ENCODE measurements at regions of chr20 and their contacts with region 1.

Region 1: GRCh38 chr20:11178946-11179654 is 505.3 kb upstream of the JAG1 start:
- DNase-seq: peak; percentile 98
- ATAC-seq: peak; percentile 94
- H3K4me3 ChIP-seq: no peak overlapping the region
- H3K27ac ChIP-seq: peak overlapping the region; percentile 85
- H3K4me1 ChIP-seq: peaks cover 36% of the 10 kb centered on the region
- H3K27me3 ChIP-seq: no peaks in the 10 kb centered on the region
- CTCF ChIP-seq: peak; percentile 40

Region 2: GRCh38 chr20:11117808-11118528 is 61.1 kb before region 1 on chr20:
- CTCF ChIA-PET with region 1: no interaction called
- POLR2A ChIA-PET with region 1: no interaction called
- intact Hi-C with region 1: loop called (anchors 2 kb)
- DNase-seq: peak; percentile 98
- ATAC-seq: peak; percentile 94
- H3K4me3 ChIP-seq: no peak overlapping the region
- H3K27ac ChIP-seq: peak overlapping the region; percentile 89
- H3K4me1 ChIP-seq: peaks cover 29% of the 10 kb centered on the region
- H3K27me3 ChIP-seq: no peaks in the 10 kb centered on the region
- CTCF ChIP-seq: no peak

Region 3: DNA sequence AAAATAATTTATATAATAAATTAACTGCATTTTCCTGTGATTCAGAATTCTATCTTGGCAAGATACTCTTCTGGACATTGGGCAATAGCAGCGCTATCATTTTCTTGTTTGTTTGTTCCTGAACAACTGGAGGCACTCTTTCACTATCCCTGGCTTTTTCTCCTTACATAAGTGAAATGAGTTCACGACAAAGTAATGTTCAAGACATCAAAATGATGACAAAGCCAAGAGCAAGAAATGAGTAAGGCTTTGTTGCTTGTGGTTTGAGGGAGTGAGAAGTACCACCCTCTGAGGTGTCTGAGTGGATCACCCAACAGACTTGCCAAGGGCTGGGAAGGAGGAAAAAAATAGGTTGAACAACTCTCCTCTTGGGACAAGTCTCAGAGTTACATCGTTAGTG is 38.7 kb before region 1 on chr20:
- CTCF ChIA-PET with region 1: no interaction called
- POLR2A ChIA-PET with region 1: no interaction called
- intact Hi-C with region 1: loop called (anchors 5 kb)
- DNase-seq: peak; percentile 96
- ATAC-seq: peak; percentile 97
- H3K4me3 ChIP-seq: no peak overlapping the region
- H3K27ac ChIP-seq: peak overlapping the region; percentile 66
- H3K4me1 ChIP-seq: peaks cover 17% of the 10 kb centered on the region
- H3K27me3 ChIP-seq: no peaks in the 10 kb centered on the region
- CTCF ChIP-seq: peak; percentile 48; the same call in 1 of the 2 replicates

Region 4: GRCh38 chr20:11153819-11154218 is 25.3 kb before region 1 on chr20:
- CTCF ChIA-PET with region 1: no interaction called
- POLR2A ChIA-PET with region 1: no interaction called
- intact Hi-C with region 1: loop called (anchors 1 kb)
- DNase-seq: peak; percentile 82
- ATAC-seq: peak; percentile 70
- H3K4me3 ChIP-seq: no peak overlapping the region
- H3K27ac ChIP-seq: peak overlapping the region; percentile 63
- H3K4me1 ChIP-seq: peaks cover 49% of the 10 kb centered on the region
- H3K27me3 ChIP-seq: no peaks in the 10 kb centered on the region
- CTCF ChIP-seq: no peak

Region 5: GRCh38 chr20:11229772-11230171 is 50.7 kb after region 1 on chr20:
- CTCF ChIA-PET with region 1: no interaction called
- POLR2A ChIA-PET with region 1: no interaction called
- intact Hi-C with region 1: no loop called
- DNase-seq: peak; percentile 82
- ATAC-seq: peak; percentile 91
- H3K4me3 ChIP-seq: no peak overlapping the region
- H3K27ac ChIP-seq: peak overlapping the region; percentile 47
- H3K4me1 ChIP-seq: peaks cover 15% of the 10 kb centered on the region
- H3K27me3 ChIP-seq: no peaks in the 10 kb centered on the region
- CTCF ChIP-seq: no peak

Region 6: GRCh38 chr20:11387189-11387754 is 208.2 kb after region 1 on chr20:
- CTCF ChIA-PET with region 1: no interaction called
- POLR2A ChIA-PET with region 1: no interaction called
- intact Hi-C with region 1: no loop called
- DNase-seq: peak; percentile 87
- ATAC-seq: peak; percentile 53
- H3K4me3 ChIP-seq: no peak overlapping the region
- H3K27ac ChIP-seq: peak overlapping the region; percentile 65
- H3K4me1 ChIP-seq: peaks cover 24% of the 10 kb centered on the region
- H3K27me3 ChIP-seq: no peaks in the 10 kb centered on the region
- CTCF ChIP-seq: no peak

Region 7: GRCh38 chr20:11429168-11429567 is 250.1 kb after region 1 on chr20:
- CTCF ChIA-PET with region 1: no interaction called
- POLR2A ChIA-PET with region 1: no interaction called
- intact Hi-C with region 1: no loop called
- DNase-seq: peak; percentile 71
- ATAC-seq: peak; percentile 49
- H3K4me3 ChIP-seq: no peak overlapping the region
- H3K27ac ChIP-seq: no peak overlapping the region
- H3K4me1 ChIP-seq: peaks cover 11% of the 10 kb centered on the region; the same call in 1 of the 2 replicates
- H3K27me3 ChIP-seq: no peaks in the 10 kb centered on the region
- CTCF ChIP-seq: no peak

Measured in PC-3 (cell line).